ENCODE measurements at regions of chr19 and their contacts with region 1.

Region 1: GRCh38 chr19:18419195-18419698 is at the start of gene SSBP4:
- DNase-seq: peak; percentile 52 to 79
- ATAC-seq: peak; percentile 53
- total RNA-seq, gene SSBP4: 37.4 to 50.7 TPM

Region 2: GRCh38 chr19:18349524-18350128 is 69.6 kb before region 1 on chr19:
- intact Hi-C with region 1: loop called (anchors 5 to 10 kb)
- DNase-seq: peak in 1 of 2 donors; percentile 60
- ATAC-seq: peak; percentile 69

Region 3: GRCh38 chr19:19956434-19957075 is 1537.3 kb after region 1 on chr19:
- intact Hi-C with region 1: no loop called
- DNase-seq: no peak
- ATAC-seq: no peak

Measured in left colon (tissue), 2 donors.